HEK293 (cell line): ENCODE measurements at regions of chr22 and their contacts with region 1.

Region 1: GRCh38 chr22:20456064-20456721 is 18.6 kb upstream of the SCARF2 start:
- H3K4me3 ChIP-seq: no peak overlapping the region
- H3K27ac ChIP-seq: no peak overlapping the region
- H3K4me1 ChIP-seq: no peaks in the 10 kb centered on the region
- CTCF ChIP-seq: peak; percentile 77

Region 2: GRCh38 chr22:20156611-20157429 is 299.4 kb before region 1 on chr22:
- CTCF ChIA-PET with region 1: interaction called, 14 read pairs
- POLR2A ChIA-PET with region 1: interaction called, 7 read pairs
- H3K4me3 ChIP-seq: no peak overlapping the region
- H3K27ac ChIP-seq: no peak overlapping the region
- H3K4me1 ChIP-seq: no peaks in the 10 kb centered on the region
- CTCF ChIP-seq: peak; percentile 98

Region 3: GRCh38 chr22:20400606-20401375 is 55.4 kb before region 1 on chr22:
- CTCF ChIA-PET with region 1: no interaction called
- POLR2A ChIA-PET with region 1: no interaction called
- H3K4me3 ChIP-seq: no peak overlapping the region
- H3K27ac ChIP-seq: no peak overlapping the region
- H3K4me1 ChIP-seq: no peaks in the 10 kb centered on the region
- CTCF ChIP-seq: no peak

Region 4: GRCh38 chr22:20412474-20413216 is 43.5 kb before region 1 on chr22:
- CTCF ChIA-PET with region 1: interaction called, 133 read pairs
- POLR2A ChIA-PET with region 1: interaction called, 8 read pairs
- H3K4me3 ChIP-seq: no peak overlapping the region
- H3K27ac ChIP-seq: no peak overlapping the region
- H3K4me1 ChIP-seq: no peaks in the 10 kb centered on the region
- CTCF ChIP-seq: no peak

Region 5: DNA sequence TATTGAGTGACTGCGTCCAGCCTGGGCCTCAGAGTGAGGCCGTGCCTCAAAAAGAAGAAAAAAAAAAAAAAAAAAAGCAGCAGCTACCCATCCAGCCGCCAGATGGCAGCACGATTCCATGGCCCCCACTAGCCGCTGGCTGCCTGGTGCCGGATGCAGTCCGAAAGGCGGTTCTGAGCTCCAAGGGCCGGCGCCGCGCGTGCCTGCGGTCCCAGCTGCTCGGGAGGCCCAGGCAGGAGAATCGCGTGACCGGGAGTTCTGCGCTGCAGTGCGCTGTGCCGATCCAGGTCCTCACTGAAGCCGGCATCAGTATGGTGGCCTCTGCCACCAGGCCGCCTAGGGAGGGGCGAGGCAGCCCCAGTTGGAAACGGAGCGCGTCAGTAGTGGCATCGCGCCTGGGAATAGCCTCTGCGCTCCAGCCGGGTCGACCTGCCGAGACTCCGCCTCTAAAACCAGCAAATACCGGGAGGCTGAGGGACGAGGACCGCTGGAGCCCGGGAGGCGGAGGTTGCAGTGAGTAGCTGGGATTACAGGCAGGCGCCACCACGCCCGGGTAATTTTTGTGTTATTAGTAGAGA is 37.9 kb before region 1 on chr22:
- CTCF ChIA-PET with region 1: interaction called, 133 read pairs
- POLR2A ChIA-PET with region 1: interaction called, 8 read pairs
- H3K4me3 ChIP-seq: peak overlapping the region; percentile 40
- H3K27ac ChIP-seq: no peak overlapping the region
- H3K4me1 ChIP-seq: no peaks in the 10 kb centered on the region
- CTCF ChIP-seq: peak; percentile 96

Region 6: GRCh38 chr22:20436768-20437612 is 19.2 kb before region 1 on chr22:
- CTCF ChIA-PET with region 1: interaction called, 15 read pairs
- POLR2A ChIA-PET with region 1: interaction called, 4 read pairs
- H3K4me3 ChIP-seq: peak overlapping the region; percentile 80
- H3K27ac ChIP-seq: peak overlapping the region; percentile 51; the same call in 1 of the 2 replicates
- H3K4me1 ChIP-seq: no peaks in the 10 kb centered on the region
- CTCF ChIP-seq: no peak

Region 7: GRCh38 chr22:20442485-20443284 is 13.5 kb before region 1 on chr22:
- CTCF ChIA-PET with region 1: interaction called, 18 read pairs
- POLR2A ChIA-PET with region 1: no interaction called
- H3K4me3 ChIP-seq: no peak overlapping the region
- H3K27ac ChIP-seq: no peak overlapping the region
- H3K4me1 ChIP-seq: no peaks in the 10 kb centered on the region
- CTCF ChIP-seq: no peak

Region 8: DNA sequence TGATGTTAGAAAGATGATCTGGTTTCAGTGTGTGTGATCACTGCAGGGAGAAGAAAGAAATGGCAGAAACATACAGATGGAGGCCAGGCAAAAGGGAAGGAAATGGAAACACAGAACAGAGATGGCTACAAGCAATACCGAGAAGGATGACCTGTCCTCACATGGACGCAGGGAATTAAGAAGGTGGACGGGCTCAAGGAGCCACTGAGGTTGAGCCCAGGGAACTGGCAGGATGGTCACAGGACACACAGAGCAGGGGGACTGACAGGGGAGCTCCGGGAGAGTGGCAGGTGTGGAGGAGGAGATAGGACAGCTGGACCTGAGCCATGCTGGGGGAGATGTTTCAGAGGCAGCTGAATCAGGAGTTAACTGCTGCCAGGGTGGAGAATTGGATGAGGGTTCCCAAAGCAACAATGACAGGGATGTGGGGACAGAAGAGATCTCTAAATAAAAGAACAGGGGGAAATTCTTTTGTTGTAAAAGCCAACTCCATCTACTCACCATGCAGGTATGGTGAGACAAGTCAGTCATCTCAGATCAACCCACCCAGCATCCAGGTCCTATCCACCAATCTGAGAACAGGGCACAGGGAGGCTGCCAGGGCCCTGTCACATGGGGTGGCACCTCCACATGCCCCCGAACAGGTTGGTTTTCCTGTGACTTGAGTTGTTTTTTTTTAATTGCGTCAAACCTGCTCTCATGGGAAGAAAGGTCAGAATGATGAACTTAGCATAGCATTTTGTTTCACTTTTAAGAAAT is 13.1 kb after region 1 on chr22:
- CTCF ChIA-PET with region 1: interaction called, 10 read pairs
- POLR2A ChIA-PET with region 1: no interaction called
- H3K4me3 ChIP-seq: no peak overlapping the region
- H3K27ac ChIP-seq: no peak overlapping the region
- H3K4me1 ChIP-seq: no peaks in the 10 kb centered on the region
- CTCF ChIP-seq: no peak

Region 9: GRCh38 chr22:20484948-20485683 is 28.9 kb after region 1 on chr22:
- CTCF ChIA-PET with region 1: no interaction called
- POLR2A ChIA-PET with region 1: no interaction called
- H3K4me3 ChIP-seq: no peak overlapping the region
- H3K27ac ChIP-seq: no peak overlapping the region
- H3K4me1 ChIP-seq: no peaks in the 10 kb centered on the region
- CTCF ChIP-seq: no peak